ENCODE measurements at regions of chr4 and their contacts with region 1.

Region 1: GRCh38 chr4:55546756-55547465 is at the start of gene CLOCK:
- DNase-seq: peak; percentile 84
- H3K4me3 ChIP-seq: peak within 1 kb of the TSS; percentile 66 to 84 (median 77)
- H3K27ac ChIP-seq: peak within 1 kb of the TSS; percentile 87
- H3K4me1 ChIP-seq: peaks cover 45% of the 10 kb centered on the region
- H3K27me3 ChIP-seq: no peaks in the 10 kb centered on the region
- CTCF ChIP-seq: peak in 1 of 2 donors; percentile 51
- total RNA-seq, gene CLOCK: 29.3 to 35.3 TPM

Region 2: DNA sequence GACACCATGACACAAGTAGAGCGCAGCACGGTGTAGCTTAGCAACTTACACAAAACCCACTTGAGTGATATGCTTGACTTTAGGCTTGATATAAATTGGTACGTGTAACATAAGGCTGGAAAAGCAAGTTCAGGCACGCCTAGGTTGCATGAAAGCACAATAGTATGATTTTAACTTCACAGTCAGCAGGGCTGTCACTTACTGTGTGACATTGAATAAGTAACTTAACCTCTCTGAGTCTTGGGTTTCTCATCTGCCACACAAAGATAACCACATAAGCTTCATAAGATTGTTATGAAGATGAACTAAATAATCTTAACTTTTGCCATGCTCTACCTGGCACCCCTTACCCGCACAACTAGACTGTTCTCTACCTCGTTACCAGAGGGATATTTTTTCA is 191.4 kb before region 1 on chr4:
- CTCF ChIA-PET with region 1: no interaction called
- dilution Hi-C with region 1: no loop called
- in situ Hi-C with region 1: no loop called
- intact Hi-C with region 1: no loop called
- DNase-seq: peak; percentile 41
- H3K4me3 ChIP-seq: no peak overlapping the region
- H3K27ac ChIP-seq: no peak overlapping the region
- H3K4me1 ChIP-seq: peaks cover 25% of the 10 kb centered on the region
- H3K27me3 ChIP-seq: no peaks in the 10 kb centered on the region
- CTCF ChIP-seq: no peak

Region 3: DNA sequence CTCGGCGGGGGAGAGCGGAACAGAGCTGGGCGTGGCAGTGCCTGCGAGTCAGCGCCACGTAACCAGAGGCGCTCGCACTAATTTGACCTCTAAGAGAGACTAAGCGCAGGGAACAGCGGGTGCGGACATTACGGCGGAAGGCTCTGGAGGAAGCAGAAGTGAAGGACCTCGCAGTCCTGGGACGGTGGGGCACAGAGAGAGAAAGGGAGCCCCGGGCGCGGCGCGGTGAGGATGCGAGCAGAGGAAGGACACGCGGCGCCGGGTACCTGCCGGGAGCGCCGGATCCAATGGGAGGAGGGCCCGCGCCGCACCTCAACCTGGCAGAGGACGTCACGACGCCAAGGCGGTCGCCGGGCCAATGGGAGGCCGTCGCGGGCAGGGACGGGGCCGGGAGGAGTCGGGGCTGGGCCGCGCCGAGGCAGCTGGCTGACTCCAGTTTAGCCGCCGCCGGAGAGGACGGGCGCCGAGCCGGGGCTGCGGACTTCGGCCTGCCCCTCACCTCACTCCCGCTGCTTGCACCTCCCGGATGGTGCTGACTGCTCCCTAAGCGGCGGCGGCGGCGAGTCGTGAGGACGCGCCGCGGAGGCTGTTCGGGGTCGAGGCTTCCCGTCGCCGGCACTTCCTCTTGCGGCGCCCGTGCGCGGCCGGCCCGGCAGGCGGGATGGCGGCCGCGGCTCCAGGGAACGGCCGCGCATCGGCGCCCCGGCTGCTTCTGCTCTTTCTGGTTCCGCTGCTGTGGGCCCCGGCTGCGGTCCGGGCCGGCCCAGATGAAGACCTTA is 151.2 kb before region 1 on chr4 and contains the start of gene TMEM165:
- CTCF ChIA-PET with region 1: no interaction called
- dilution Hi-C with region 1: no loop called
- in situ Hi-C with region 1: no loop called
- intact Hi-C with region 1: loop called (anchors 2 kb)
- DNase-seq: peak; percentile 93
- H3K4me3 ChIP-seq: peak within 1 kb of the TSS; percentile 74 to 96 (median 85)
- H3K27ac ChIP-seq: peak within 1 kb of the TSS; percentile 89
- H3K4me1 ChIP-seq: peaks cover 17% of the 10 kb centered on the region
- H3K27me3 ChIP-seq: no peaks in the 10 kb centered on the region
- CTCF ChIP-seq: no peak
- total RNA-seq, gene TMEM165: 101 to 121 TPM

Region 4: DNA sequence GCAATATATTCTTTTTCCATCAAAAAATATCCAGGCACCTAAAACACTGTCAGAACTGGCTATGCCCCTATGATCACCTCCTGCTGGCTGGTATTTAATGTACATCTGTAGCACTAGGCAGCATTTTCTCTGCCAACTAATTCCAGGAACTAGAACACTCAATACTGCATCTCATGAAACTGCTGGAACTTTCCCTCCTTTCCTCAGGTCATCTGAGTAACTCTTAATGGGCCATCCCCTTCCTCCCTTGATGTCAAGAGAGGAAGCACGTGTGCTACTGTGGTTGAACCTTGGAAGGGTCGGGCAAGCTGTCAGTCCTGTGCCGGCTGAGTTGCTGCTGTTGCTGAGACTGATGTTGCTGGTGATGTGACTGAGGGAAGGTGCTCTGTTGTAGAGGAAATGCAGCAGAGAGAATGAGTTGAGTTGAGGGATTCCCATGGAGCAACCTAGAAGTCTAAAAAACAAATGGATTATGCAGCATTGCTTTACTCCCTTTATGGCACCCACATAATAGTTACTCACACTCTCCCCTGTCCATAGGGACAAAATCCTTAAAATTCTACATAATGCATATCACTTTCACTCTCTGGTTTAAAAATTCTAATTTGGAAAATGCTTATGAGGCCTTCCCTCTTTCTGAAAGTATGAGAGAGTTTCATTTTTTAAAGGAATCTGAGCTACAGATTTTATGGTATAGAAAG is 111.6 kb before region 1 on chr4:
- CTCF ChIA-PET with region 1: no interaction called
- dilution Hi-C with region 1: no loop called
- in situ Hi-C with region 1: no loop called
- intact Hi-C with region 1: no loop called
- DNase-seq: no peak
- H3K4me3 ChIP-seq: no peak overlapping the region
- H3K27ac ChIP-seq: no peak overlapping the region
- H3K4me1 ChIP-seq: no peaks in the 10 kb centered on the region
- H3K27me3 ChIP-seq: no peaks in the 10 kb centered on the region
- CTCF ChIP-seq: peak; percentile 12 to 39

Region 5: DNA sequence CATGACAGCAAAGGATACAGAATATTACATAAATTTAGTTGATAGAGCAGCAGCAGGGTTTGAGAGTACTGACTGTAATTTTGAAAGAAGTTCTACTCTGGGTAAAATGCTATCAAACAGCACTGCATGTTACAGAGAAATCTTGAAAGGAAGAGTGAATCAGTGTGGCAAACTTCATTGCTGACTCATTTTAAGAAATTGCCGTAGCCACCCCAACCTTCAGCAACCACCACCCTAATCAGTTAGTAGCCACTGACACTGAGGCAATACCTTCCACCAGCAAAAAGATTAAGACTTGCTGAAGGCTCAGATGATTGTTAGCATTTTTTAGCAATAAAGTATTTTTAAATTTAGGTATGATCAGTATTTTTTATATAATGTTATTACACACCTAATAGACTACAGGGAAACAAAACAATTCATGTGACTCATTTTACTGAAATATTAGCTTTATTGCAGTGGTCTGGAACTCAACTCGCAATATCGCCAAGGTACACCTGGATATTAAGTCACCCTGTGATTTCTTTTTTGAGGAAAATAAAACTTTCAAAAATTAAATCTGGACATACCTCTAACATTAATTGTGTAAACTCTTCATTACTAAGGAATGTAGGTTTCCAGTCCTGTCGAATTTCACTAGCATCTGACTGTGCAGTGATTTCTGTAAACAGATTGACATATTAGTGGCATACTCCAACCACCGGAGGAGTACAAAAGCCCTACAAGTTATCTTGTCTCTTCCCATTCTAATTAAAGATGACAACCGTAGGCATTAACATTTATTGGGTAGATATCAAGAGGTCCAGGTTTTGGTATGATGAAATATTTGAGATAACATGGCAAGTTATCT is 71.3 kb before region 1 on chr4:
- CTCF ChIA-PET with region 1: no interaction called
- dilution Hi-C with region 1: no loop called
- in situ Hi-C with region 1: loop called in 1 of 2 experiments (anchors 10 kb)
- intact Hi-C with region 1: loop called (anchors 1 kb)
- DNase-seq: peak; percentile 78
- H3K4me3 ChIP-seq: no peak overlapping the region
- H3K27ac ChIP-seq: no peak overlapping the region
- H3K4me1 ChIP-seq: peaks cover 17% of the 10 kb centered on the region
- H3K27me3 ChIP-seq: no peaks in the 10 kb centered on the region
- CTCF ChIP-seq: no peak

Region 6: DNA sequence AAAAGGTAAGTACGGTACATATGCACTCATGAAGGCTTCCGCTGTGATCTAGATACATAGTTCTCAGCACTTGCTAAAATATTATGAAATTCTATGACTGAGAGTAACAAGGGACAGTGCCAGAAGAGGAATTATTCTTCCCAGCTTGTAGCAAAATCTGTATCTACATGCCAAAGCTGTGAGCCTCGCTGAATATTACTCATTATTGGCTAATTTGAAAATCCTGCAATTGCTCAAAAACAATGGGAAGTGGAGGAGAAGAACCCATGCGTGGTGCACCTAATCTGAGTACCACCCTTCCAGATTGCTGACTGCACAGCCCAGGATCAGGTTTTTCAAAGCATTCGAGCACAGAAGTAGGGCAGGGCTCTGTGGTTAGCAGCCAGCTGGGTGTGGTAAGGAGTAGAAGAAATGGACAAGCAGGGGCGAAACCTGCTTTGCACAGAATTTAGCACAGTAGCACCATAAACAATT is 62.5 kb after region 1 on chr4:
- CTCF ChIA-PET with region 1: no interaction called
- dilution Hi-C with region 1: no loop called
- in situ Hi-C with region 1: no loop called
- intact Hi-C with region 1: loop called (anchors 5 kb)
- DNase-seq: peak; percentile 97
- H3K4me3 ChIP-seq: peak overlapping the region in 1 of 3 experiments; percentile 35
- H3K27ac ChIP-seq: peak overlapping the region; percentile 97
- H3K4me1 ChIP-seq: peaks cover 36% of the 10 kb centered on the region
- H3K27me3 ChIP-seq: no peaks in the 10 kb centered on the region
- CTCF ChIP-seq: no peak

Region 7: GRCh38 chr4:55866973-55867574 is 320.2 kb after region 1 on chr4:
- CTCF ChIA-PET with region 1: no interaction called
- dilution Hi-C with region 1: no loop called
- in situ Hi-C with region 1: no loop called
- intact Hi-C with region 1: loop called (anchors 2 kb)
- DNase-seq: peak; percentile 54
- H3K4me3 ChIP-seq: no peak overlapping the region
- H3K27ac ChIP-seq: peak overlapping the region; percentile 59
- H3K4me1 ChIP-seq: peaks cover 20% of the 10 kb centered on the region
- H3K27me3 ChIP-seq: no peaks in the 10 kb centered on the region
- CTCF ChIP-seq: peak; percentile 82 to 88

Region 8: GRCh38 chr4:55980725-55981124 is 433.8 kb after region 1 on chr4:
- CTCF ChIA-PET with region 1: no interaction called
- dilution Hi-C with region 1: no loop called
- in situ Hi-C with region 1: no loop called
- intact Hi-C with region 1: no loop called
- DNase-seq: no peak
- H3K4me3 ChIP-seq: no peak overlapping the region
- H3K27ac ChIP-seq: no peak overlapping the region
- H3K4me1 ChIP-seq: no peaks in the 10 kb centered on the region
- H3K27me3 ChIP-seq: no peaks in the 10 kb centered on the region
- CTCF ChIP-seq: no peak

Measured in mammary epithelial cell (primary cell).